ENCODE measurements at regions of chr22 and their contacts with region 1.

Region 1: GRCh38 chr22:37686002-37686982 is at the start of gene NOL12:
- DNase-seq: peak; percentile 87 to 91 (median 90)
- ATAC-seq: peak; percentile 82
- H3K4me3 ChIP-seq: peak within 1 kb of the TSS; percentile 83
- H3K4me1 ChIP-seq: peaks cover 43% of the 10 kb centered on the region
- CTCF ChIP-seq: no peak
- total RNA-seq, gene NOL12: 28.5 to 45.3 (median 42.6) TPM

Region 2: DNA sequence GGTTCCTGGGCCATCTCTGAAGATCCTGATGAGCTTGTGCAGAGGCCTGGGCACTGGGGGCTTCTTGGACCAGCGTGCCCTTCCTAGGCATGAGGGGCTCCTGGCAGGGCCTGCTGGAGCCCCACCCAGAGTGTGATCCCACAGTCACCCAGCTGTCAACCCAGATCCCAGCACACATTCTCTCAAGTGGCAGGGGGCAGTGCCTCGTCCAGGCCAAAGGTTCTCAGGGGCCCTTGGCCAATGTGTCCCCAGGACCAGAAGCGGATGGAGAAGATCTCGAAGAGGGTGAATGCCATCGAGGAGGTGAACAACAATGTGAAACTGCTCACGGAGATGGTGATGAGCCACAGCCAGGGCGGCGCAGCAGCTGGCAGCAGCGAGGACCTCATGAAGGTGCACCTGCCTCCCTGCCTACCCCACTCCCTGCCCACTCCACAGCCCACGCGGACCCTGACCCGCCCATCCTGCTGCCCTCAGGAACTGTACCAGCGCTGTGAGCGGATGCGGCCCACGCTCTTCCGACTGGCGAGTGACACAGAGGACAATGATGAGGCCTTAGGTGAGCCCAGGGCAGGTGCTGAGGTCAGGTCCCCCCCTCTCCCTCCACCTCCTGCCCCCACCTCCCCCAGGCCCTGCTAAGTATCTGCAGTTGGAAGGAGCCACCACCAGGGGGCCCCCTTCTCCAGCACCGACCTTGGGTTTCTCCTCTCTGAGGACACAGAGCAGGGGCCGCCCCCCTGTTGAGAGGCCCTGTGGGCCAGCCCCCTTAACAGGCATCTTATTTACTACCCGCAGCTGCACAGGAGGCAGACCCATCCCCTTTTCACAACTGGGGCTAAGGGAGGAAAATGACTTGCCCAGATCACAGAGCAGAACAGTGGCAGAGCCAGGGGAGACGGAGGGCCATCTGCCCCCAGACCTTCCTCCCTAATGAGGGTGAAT is 62.9 kb before region 1 on chr22:
- intact Hi-C with region 1: loop called in 1 of 2 experiments (anchors 10 kb)
- DNase-seq: peak; percentile 71 to 82 (median 80)
- ATAC-seq: peak; percentile 75
- H3K4me3 ChIP-seq: no peak overlapping the region
- H3K4me1 ChIP-seq: peaks cover 37% of the 10 kb centered on the region
- CTCF ChIP-seq: peak; percentile 77

Region 3: GRCh38 chr22:37643225-37643847 is 43.0 kb before region 1 on chr22:
- intact Hi-C with region 1: loop called (anchors 5 kb)
- DNase-seq: peak; percentile 89 to 96 (median 95)
- ATAC-seq: peak; percentile 51
- H3K4me3 ChIP-seq: no peak overlapping the region
- H3K4me1 ChIP-seq: peaks cover 37% of the 10 kb centered on the region
- CTCF ChIP-seq: peak; percentile 92